BJ (cell line): ENCODE measurements at regions of chr14 and their contacts with region 1.

Region 1: GRCh38 chr14:23379366-23380196 is 2.7 kb downstream of the CMTM5 start:
- DNase-seq: no peak
- H3K4me3 ChIP-seq: no peak overlapping the region
- H3K27me3 ChIP-seq: peaks cover 9% of the 10 kb centered on the region
- CTCF ChIP-seq: peak; percentile 94

Region 2: GRCh38 chr14:23269193-23269592 is 110.4 kb before region 1 on chr14:
- CTCF ChIA-PET with region 1: interaction called, 17 read pairs
- POLR2A ChIA-PET with region 1: no interaction called
- DNase-seq: no peak
- H3K4me3 ChIP-seq: no peak overlapping the region
- H3K27me3 ChIP-seq: no peaks in the 10 kb centered on the region
- CTCF ChIP-seq: no peak

Region 3: GRCh38 chr14:23327947-23328744 is 51.4 kb before region 1 on chr14:
- CTCF ChIA-PET with region 1: interaction called, 132 read pairs
- POLR2A ChIA-PET with region 1: no interaction called
- DNase-seq: no peak
- H3K4me3 ChIP-seq: no peak overlapping the region
- H3K27me3 ChIP-seq: no peaks in the 10 kb centered on the region
- CTCF ChIP-seq: peak; percentile 79

Region 4: GRCh38 chr14:23345987-23346692 is 33.4 kb before region 1 on chr14:
- CTCF ChIA-PET with region 1: interaction called, 15 read pairs
- POLR2A ChIA-PET with region 1: no interaction called
- DNase-seq: no peak
- H3K4me3 ChIP-seq: no peak overlapping the region
- H3K27me3 ChIP-seq: no peaks in the 10 kb centered on the region
- CTCF ChIP-seq: no peak

Region 5: DNA sequence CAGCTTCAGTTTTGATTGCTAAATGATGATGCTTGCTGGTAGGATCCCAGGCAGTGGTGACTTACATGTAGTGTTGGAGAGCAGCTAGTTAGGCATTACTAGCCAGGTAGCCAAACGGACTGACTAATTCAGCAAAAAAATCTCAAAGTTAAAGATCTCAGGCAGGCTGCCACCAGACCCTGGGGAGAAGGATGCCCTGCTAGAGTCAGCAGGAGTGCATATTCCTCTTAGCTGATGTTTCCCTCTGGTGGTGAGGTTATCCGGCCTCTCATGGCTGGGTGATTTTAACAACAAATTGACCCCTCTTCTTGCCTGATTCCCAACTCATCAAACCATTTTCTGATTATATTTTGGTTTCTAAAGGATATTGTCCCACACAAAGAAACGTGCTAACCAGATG is 17.4 kb before region 1 on chr14:
- CTCF ChIA-PET with region 1: interaction called, 41 read pairs
- POLR2A ChIA-PET with region 1: no interaction called
- DNase-seq: no peak
- H3K4me3 ChIP-seq: no peak overlapping the region
- H3K27me3 ChIP-seq: peaks cover 8% of the 10 kb centered on the region
- CTCF ChIP-seq: peak; percentile 34; the same call in 1 of the 2 replicates

Region 6: GRCh38 chr14:24135834-24136542 is 756.4 kb after region 1 on chr14 and contains the start of gene PSME1:
- CTCF ChIA-PET with region 1: no interaction called
- POLR2A ChIA-PET with region 1: no interaction called
- DNase-seq: peak; percentile 32
- H3K4me3 ChIP-seq: peak within 1 kb of the TSS; percentile 86
- H3K27me3 ChIP-seq: no peaks in the 10 kb centered on the region
- CTCF ChIP-seq: no peak
- polyA plus RNA-seq, gene PSME1: 48.9 and 106 TPM in 2 replicates